HEK293T (cell line): ENCODE measurements at regions of chr19 and their contacts with region 1.

Region 1: DNA sequence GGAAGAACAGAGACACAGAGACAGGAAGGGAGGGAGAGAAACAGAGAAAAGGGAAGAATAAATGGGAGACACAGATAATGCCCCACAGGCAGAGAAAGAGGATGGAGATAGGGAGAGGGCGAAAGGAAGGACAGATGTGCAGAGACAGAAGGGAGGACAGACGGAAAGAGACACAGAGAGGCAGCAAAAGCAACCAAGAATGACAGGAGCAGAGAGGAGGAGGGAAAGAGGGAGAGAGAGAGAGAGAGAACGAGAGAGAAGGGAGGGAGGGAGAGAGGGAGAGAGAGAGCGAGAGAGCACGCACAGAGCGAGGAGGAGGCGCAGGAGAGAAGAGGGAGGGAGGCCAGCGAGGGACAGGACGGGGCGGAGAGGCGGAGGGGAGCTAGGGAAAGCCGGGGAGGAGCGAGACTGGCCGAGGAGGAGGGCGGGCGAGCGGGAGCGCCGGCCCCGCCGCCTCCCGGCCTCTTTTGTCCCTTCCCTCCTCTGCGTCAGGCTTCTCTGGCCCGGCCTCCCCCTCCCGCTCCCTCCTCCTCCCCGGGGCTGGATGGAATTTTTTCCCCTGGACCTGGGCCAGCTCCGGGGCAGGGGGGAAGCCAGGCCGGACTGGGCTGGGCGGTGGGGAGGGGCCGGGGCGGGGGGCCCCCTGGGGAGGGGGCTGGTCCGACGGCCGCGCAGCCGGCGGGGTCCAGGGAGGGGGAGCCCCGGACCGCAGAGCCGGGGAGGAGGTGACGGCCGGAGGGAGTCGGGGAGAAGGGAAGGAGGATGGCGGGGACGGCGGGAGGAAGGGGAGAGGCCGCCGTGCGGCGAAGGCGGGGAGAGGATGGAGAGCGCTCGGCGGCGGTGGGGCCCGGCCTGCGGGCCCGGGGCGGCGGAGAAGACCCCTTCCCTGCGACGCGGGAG is 4.2 kb upstream of the SPACA6 start:
- DNase-seq: peak; percentile 80

Region 2: DNA sequence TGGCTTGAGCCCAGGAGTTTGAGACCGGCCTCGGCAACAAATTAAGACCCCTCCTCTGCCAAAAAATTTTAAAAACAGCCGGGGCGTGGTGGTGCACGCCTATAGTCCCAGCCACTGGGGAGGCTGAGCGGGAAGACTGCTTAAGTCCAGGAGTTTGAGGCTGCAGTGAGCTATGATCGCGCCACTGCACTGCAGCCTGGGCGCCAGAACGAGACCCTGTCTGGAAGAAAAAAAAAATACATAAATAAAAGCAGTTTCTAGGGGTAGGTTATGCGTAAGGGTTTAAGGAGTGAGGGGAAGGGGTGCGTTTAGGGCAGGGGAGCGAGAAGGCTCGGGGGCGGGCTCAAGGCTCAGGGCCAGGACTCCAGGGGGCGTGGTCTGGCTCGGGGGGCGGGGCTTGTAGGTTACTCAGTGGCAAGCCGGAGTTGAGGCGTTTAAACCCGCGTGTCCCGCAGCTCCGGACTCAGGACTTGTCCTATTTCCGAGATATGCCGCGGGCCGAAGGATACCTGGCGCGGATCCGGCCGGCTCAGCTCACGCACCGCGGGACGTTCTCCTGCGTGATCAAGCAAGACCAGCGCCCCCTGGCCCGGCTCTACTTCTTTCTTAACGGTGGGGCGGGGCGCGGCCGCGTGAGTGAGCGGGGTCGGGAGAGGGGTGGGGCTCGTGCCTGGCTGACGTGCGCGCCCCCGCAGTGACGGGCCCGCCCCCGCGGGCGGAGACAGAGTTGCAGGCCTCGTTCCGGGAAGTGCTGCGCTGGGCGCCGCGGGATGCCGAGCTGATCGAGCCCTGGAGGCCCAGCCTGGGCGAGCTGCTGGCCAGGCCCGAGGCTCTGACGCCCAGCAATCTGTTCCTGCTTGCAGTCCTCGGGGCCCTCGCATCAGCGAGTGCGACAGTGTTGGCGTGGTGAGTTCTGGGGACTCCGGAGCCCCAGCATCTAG is 14.9 kb after region 1 on chr19:
- CTCF ChIA-PET with region 1: interaction called, 7 read pairs
- POLR2A ChIA-PET with region 1: interaction called, 31 read pairs
- DNase-seq: peak; percentile 94